MCF 10A (cell line): ENCODE measurements at regions of chr4 and their contacts with region 1.

Region 1: GRCh38 chr4:4914059-4914820 is 54.8 kb downstream of the MSX1 start:
- DNase-seq: peak; percentile 96
- H3K4me3 Mint-ChIP-seq: no peak overlapping the region
- H3K27ac Mint-ChIP-seq: peak overlapping the region; percentile 70
- H3K4me1 Mint-ChIP-seq: peaks cover 15% of the 10 kb centered on the region
- H3K27me3 Mint-ChIP-seq: no peaks in the 10 kb centered on the region
- CTCF ChIP-seq: no peak

Region 2: GRCh38 chr4:4585012-4585670 is 329.1 kb before region 1 on chr4:
- CTCF ChIA-PET with region 1: no interaction called
- POLR2A ChIA-PET with region 1: no interaction called
- intact Hi-C with region 1: no loop called
- DNase-seq: peak; percentile 41
- H3K4me3 Mint-ChIP-seq: peak overlapping the region; percentile 35
- H3K27ac Mint-ChIP-seq: peak overlapping the region; percentile 84
- H3K4me1 Mint-ChIP-seq: peaks cover 28% of the 10 kb centered on the region
- H3K27me3 Mint-ChIP-seq: no peaks in the 10 kb centered on the region
- CTCF ChIP-seq: no peak

Region 3: GRCh38 chr4:4599481-4600275 is 314.6 kb before region 1 on chr4:
- CTCF ChIA-PET with region 1: no interaction called
- POLR2A ChIA-PET with region 1: no interaction called
- intact Hi-C with region 1: no loop called
- DNase-seq: no peak
- H3K4me3 Mint-ChIP-seq: no peak overlapping the region
- H3K27ac Mint-ChIP-seq: no peak overlapping the region
- H3K4me1 Mint-ChIP-seq: no peaks in the 10 kb centered on the region
- H3K27me3 Mint-ChIP-seq: no peaks in the 10 kb centered on the region
- CTCF ChIP-seq: no peak

Region 4: GRCh38 chr4:5037553-5038551 is 123.6 kb after region 1 on chr4:
- CTCF ChIA-PET with region 1: no interaction called
- POLR2A ChIA-PET with region 1: no interaction called
- intact Hi-C with region 1: loop called (anchors 5 kb)
- DNase-seq: peak; percentile 93
- H3K4me3 Mint-ChIP-seq: peak overlapping the region; percentile 50
- H3K27ac Mint-ChIP-seq: peak overlapping the region; percentile 35
- H3K4me1 Mint-ChIP-seq: peaks cover 16% of the 10 kb centered on the region
- H3K27me3 Mint-ChIP-seq: no peaks in the 10 kb centered on the region
- CTCF ChIP-seq: no peak